Activated naive CD4-positive, alpha-beta T cell treated with anti-CD3 and anti-CD28 coated beads for 36 hours (primary cell): ENCODE measurements at regions of chr19 and their contacts with region 1.

Region 1: GRCh38 chr19:37466798-37467607 is at the start of gene ZNF569:
- DNase-seq: peak; percentile 93
- H3K4me3 Mint-ChIP-seq: peak within 1 kb of the TSS; percentile 96
- H3K27ac Mint-ChIP-seq: peak within 1 kb of the TSS; percentile 92
- H3K4me1 Mint-ChIP-seq: peaks cover 28% of the 10 kb centered on the region
- H3K27me3 Mint-ChIP-seq: no peaks in the 10 kb centered on the region
- total RNA-seq, gene ZNF569: 8.6 to 10.6 TPM

Region 2: GRCh38 chr19:36665832-36666231 is 801.2 kb before region 1 on chr19:
- CTCF ChIA-PET with region 1: no interaction called
- intact Hi-C with region 1: loop called (anchors 5 kb)
- DNase-seq: no peak
- H3K4me3 Mint-ChIP-seq: peak overlapping the region; percentile 91
- H3K27ac Mint-ChIP-seq: no peak overlapping the region
- H3K4me1 Mint-ChIP-seq: peaks cover 20% of the 10 kb centered on the region
- H3K27me3 Mint-ChIP-seq: no peaks in the 10 kb centered on the region

Region 3: GRCh38 chr19:36915992-36916830 is 550.8 kb before region 1 on chr19 and contains the starts of genes ZNF568 and ZNF829:
- CTCF ChIA-PET with region 1: no interaction called
- intact Hi-C with region 1: loop called (anchors 1 kb)
- DNase-seq: peak; percentile 96
- H3K4me3 Mint-ChIP-seq: peak within 1 kb of the TSS; percentile 87
- H3K27ac Mint-ChIP-seq: peak within 1 kb of the TSS; percentile 91
- H3K4me1 Mint-ChIP-seq: peaks cover 17% of the 10 kb centered on the region
- H3K27me3 Mint-ChIP-seq: no peaks in the 10 kb centered on the region
- total RNA-seq, gene ZNF568: 5.3 to 6.3 TPM
- total RNA-seq, gene ZNF829: 3.5 to 3.7 TPM

Region 4: GRCh38 chr19:37077934-37078725 is 388.9 kb before region 1 on chr19 and contains the start of gene ZNF420:
- CTCF ChIA-PET with region 1: no interaction called
- intact Hi-C with region 1: loop called (anchors 5 kb)
- DNase-seq: peak; percentile 92
- H3K4me3 Mint-ChIP-seq: peak within 1 kb of the TSS; percentile 93
- H3K27ac Mint-ChIP-seq: peak within 1 kb of the TSS; percentile 89
- H3K4me1 Mint-ChIP-seq: peaks cover 21% of the 10 kb centered on the region
- H3K27me3 Mint-ChIP-seq: no peaks in the 10 kb centered on the region
- total RNA-seq, gene ZNF420: 6.4 to 7.3 TPM

Region 5: DNA sequence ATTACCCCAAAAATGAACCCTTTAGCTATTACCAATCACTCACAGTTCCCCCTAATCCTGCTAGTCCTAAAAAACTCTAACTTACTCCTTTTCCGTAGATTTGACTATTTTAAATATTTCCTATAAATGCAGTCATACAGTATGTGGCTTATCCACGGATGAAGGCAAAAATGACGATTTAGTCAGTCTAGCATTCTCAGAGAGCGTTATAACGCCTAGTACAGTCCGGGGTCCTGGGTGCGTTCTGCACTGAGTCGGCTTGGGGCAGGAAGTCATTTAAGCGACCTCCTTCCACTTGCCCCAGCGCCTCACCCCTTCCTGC is 249.5 kb before region 1 on chr19:
- CTCF ChIA-PET with region 1: no interaction called
- intact Hi-C with region 1: no loop called
- DNase-seq: no peak
- H3K4me3 Mint-ChIP-seq: peak overlapping the region; percentile 88
- H3K27ac Mint-ChIP-seq: peak overlapping the region; percentile 92
- H3K4me1 Mint-ChIP-seq: peaks cover 16% of the 10 kb centered on the region
- H3K27me3 Mint-ChIP-seq: no peaks in the 10 kb centered on the region

Region 6: DNA sequence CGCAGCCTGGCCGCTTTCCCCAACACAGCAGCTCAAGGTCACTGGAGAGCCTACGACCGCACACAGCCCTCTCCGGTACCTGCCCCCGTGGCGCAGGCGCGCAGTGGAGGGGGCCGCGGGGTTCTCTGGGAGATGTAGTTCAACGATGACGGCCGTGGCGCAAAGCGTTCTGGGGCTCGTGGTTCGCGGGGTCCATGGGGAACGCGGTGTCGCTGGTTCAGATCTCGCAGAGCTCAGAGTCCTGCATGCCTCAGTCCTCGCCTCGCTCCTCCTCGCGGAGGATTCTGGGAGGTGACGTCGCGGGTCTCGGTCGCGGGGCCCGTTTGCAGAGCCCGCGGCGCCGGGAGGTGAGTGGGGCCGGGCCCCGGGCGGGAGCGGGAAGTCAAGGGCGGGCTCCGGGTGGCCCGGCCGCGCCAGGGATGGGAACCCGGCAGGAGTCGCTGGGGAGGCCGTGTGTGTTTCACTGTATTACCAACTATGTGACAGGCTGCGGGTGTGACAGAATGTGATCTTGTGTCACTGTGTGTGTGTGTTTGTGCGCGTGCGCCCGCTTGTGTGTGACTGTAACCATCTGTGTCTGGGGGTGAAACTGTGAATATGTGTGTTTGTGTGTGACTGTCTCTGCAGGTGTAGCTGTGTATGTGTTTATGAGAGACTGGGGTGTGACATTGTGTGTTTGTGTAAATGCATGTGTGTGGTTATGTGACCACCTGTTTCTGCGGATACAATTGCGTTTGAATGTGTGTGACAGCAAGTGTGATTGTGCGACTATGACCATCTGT is 95.9 kb before region 1 on chr19 and contains the start of gene ZNF527:
- CTCF ChIA-PET with region 1: no interaction called
- intact Hi-C with region 1: loop called (anchors 1 kb)
- DNase-seq: peak; percentile 97
- H3K4me3 Mint-ChIP-seq: peak within 1 kb of the TSS; percentile 83
- H3K27ac Mint-ChIP-seq: peak within 1 kb of the TSS; percentile 83
- H3K4me1 Mint-ChIP-seq: peaks cover 11% of the 10 kb centered on the region
- H3K27me3 Mint-ChIP-seq: no peaks in the 10 kb centered on the region
- total RNA-seq, gene ZNF527: 4.3 to 5.0 TPM

Region 7: DNA sequence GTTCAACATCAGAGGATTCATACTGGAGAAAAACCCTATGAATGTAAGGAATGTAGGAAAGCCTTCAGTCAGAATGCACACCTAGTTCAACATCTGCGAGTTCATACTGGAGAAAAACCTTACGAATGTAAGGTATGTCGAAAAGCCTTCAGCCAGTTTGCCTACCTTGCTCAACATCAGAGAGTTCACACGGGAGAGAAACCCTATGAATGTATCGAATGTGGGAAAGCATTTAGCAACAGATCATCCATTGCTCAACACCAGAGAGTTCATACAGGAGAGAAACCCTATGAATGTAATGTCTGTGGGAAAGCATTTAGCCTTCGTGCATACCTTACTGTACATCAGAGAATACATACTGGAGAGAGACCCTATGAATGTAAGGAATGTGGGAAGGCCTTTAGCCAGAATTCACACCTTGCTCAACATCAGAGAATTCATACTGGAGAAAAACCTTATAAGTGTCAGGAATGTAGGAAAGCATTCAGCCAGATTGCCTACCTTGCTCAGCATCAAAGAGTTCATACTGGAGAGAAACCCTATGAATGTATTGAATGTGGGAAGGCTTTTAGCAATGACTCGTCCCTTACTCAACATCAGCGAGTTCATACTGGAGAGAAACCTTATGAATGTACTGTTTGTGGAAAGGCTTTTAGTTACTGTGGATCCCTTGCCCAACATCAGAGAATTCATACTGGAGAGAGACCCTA is 17.6 kb after region 1 on chr19:
- CTCF ChIA-PET with region 1: no interaction called
- intact Hi-C with region 1: no loop called
- DNase-seq: no peak
- H3K4me3 Mint-ChIP-seq: no peak overlapping the region
- H3K27ac Mint-ChIP-seq: no peak overlapping the region
- H3K4me1 Mint-ChIP-seq: no peaks in the 10 kb centered on the region
- H3K27me3 Mint-ChIP-seq: no peaks in the 10 kb centered on the region

Region 8: DNA sequence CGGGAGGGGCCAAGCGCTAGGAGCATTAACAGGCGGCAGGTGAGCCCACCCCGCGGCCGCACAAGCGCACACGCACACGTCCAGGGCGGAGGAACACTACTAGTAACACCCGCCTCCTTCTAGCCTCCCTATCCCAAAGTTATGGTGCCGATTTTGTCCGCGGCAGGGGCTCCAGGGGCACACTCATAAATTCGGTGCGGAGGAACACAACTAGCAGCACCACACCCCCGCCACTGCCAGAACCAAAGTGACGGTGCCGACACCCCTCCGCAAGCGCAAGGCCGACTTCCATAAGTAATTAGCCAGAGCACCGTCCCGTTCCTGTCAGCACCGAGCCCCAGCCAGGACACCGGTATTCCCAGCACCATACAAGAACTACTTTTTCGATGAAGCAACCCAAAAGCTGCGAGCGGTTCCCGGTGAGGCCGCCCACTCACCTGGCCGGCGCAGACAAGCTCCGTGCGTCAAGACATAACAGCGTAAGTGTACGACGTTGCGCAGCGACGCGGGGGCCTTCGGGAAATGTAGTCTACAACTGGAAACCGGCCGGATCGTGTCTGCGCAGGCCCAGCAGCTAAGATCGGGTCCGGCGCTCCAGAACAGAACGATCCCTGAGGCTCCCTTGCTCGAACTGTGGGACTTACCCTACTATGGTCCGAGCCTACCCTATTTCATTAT is 127.4 kb after region 1 on chr19 and contains the starts of genes ZNF540 and ZNF571:
- CTCF ChIA-PET with region 1: no interaction called
- intact Hi-C with region 1: loop called (anchors 1 kb)
- DNase-seq: peak; percentile 96
- H3K4me3 Mint-ChIP-seq: peak within 1 kb of the TSS; percentile 99
- H3K27ac Mint-ChIP-seq: peak within 1 kb of the TSS; percentile 97
- H3K4me1 Mint-ChIP-seq: peaks cover 17% of the 10 kb centered on the region
- H3K27me3 Mint-ChIP-seq: no peaks in the 10 kb centered on the region
- total RNA-seq, gene ZNF540: 1.0 to 1.9 TPM
- total RNA-seq, gene ZNF571: 2.8 to 3.5 TPM

Region 9: DNA sequence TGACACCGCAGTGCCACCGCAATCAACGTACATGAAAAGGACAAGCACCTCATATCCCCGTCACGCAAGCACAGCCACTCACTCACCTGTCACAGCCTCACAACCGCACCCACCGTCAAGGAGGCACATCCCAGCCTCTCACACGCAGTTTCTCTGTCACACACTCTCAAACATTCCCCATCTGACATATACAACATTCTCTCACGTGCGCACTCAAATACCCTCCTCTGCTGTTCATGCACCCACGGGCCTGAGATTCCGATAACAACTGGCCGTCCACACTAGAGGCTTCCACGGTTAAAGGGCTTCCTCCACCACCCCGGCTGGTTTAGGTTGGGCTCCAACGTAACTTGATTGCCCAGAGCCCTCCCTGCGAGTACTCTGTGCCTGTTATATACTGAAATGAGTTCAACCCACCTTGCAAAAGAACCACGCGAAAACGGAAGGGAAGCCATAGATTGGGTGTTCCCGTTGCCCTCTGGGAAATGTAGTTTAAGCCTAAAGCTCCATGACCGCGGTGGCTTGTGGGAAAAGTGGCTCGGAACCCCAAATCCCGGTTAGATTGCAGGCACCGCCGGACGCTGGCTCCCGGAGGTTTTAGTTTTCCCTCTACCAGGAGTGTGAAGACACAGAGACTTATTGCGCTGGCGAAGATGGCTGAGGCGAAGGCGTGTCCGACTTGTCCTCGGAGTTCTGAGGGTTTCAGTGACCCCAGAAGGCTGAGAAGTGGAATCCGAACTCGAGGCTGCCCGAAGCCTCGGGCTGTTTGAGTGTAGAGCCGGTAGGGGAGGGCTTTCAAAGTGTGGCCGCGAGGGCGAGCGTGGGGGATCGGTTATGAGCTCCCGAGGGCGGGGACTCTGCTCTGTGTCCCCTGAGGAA is 312.4 kb after region 1 on chr19 and contains the start of gene ZNF573:
- CTCF ChIA-PET with region 1: no interaction called
- intact Hi-C with region 1: loop called (anchors 1 kb)
- DNase-seq: peak; percentile 91
- H3K4me3 Mint-ChIP-seq: peak within 1 kb of the TSS; percentile 96
- H3K27ac Mint-ChIP-seq: peak within 1 kb of the TSS; percentile 99
- H3K4me1 Mint-ChIP-seq: peaks cover 25% of the 10 kb centered on the region
- H3K27me3 Mint-ChIP-seq: no peaks in the 10 kb centered on the region
- total RNA-seq, gene ZNF573: 6.1 to 7.3 TPM